PC-3 (cell line): ENCODE measurements at regions of chr6 and their contacts with region 1.

Region 1: DNA sequence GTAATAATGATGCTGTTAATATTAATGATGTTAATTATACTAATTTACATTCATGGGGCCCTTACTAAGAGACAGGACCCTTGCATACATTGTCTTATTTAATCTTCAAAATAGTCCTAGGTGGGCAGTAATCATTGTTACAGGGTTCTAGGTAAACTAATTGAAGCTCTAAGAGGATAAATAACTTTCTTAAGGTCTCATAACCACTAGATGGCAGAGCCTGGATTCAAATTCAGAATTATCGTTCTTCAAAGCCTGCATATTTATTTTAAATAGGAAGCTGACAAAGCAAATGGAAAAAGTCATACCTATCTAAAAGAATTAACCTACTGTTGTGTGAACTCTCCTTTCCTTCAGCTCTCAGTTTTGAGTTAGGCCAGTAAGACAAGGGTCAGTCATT is 23.5 kb downstream of the PTCHD4 start:
- DNase-seq: peak; percentile 68
- ATAC-seq: peak; percentile 48; the same call in 1 of the 2 replicates
- H3K4me3 ChIP-seq: no peak overlapping the region
- H3K27ac ChIP-seq: no peak overlapping the region
- H3K4me1 ChIP-seq: no peaks in the 10 kb centered on the region
- H3K27me3 ChIP-seq: no peaks in the 10 kb centered on the region
- CTCF ChIP-seq: peak; percentile 66

Region 2: DNA sequence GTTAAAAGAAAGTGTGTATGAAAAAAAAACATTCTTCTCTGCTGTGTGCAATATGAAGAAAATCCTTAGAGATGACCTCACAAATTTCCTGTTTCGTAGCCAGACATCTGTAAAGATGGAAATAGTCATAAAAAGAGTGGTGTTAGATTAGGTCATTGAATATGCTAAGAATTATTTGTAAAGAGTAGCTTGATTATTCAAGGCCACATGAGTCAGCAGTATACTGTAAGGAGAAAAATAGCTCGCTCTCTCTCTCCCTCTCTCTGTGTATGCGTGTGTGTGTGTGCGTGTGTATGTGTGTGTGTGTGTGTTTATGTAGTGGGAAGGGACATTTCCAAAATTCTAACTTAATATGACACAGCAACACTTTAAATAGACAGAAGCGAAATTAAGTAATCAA is 55.3 kb before region 1 on chr6:
- CTCF ChIA-PET with region 1: no interaction called
- POLR2A ChIA-PET with region 1: no interaction called
- intact Hi-C with region 1: no loop called
- DNase-seq: peak; percentile 36
- ATAC-seq: no peak
- H3K4me3 ChIP-seq: no peak overlapping the region
- H3K27ac ChIP-seq: no peak overlapping the region
- H3K4me1 ChIP-seq: no peaks in the 10 kb centered on the region
- H3K27me3 ChIP-seq: no peaks in the 10 kb centered on the region
- CTCF ChIP-seq: no peak

Region 3: DNA sequence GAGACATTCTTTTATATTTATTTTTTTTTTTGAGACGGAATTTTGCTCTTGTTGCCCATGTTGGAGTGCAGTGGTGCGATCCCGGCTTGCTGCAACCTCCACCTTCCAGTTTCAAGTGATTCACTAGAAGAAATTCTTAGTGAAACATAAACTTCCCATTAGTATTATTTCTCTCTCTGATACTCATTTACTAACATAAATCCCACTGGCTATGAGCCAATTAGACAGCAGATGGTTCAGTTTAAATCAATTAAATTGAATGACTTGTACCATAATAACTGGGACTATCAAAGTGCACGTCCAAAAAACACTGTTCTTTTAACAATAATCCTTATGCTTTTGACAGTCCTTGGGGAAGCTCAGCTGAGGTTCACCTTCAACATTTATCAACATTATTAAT is 134.8 kb after region 1 on chr6:
- CTCF ChIA-PET with region 1: no interaction called
- POLR2A ChIA-PET with region 1: no interaction called
- intact Hi-C with region 1: no loop called
- DNase-seq: no peak
- ATAC-seq: no peak
- H3K4me3 ChIP-seq: no peak overlapping the region
- H3K27ac ChIP-seq: no peak overlapping the region
- H3K4me1 ChIP-seq: no peaks in the 10 kb centered on the region
- H3K27me3 ChIP-seq: no peaks in the 10 kb centered on the region
- CTCF ChIP-seq: no peak

Region 4: DNA sequence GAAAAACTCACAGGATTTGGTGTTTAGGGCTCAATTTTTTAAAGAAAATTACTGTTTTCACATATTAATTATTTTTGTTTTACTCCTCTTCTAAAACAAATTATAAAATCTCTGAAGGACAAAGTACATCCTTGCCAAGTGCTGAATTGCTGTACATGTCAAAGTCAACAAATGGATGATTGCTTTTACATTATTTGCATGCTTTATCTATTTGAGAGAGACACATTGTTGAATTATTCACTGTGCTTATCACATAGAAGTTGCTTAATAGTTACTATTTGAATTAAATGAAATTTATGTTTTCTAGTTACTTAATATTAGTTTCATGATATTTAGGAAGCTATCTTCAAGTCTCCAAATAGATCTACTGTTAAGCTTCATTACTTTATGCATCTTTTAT is 342.2 kb after region 1 on chr6:
- CTCF ChIA-PET with region 1: no interaction called
- POLR2A ChIA-PET with region 1: no interaction called
- intact Hi-C with region 1: loop called (anchors 5 kb)
- DNase-seq: peak; percentile 6
- ATAC-seq: no peak
- H3K4me3 ChIP-seq: no peak overlapping the region
- H3K27ac ChIP-seq: no peak overlapping the region
- H3K4me1 ChIP-seq: peaks cover 22% of the 10 kb centered on the region
- H3K27me3 ChIP-seq: no peaks in the 10 kb centered on the region
- CTCF ChIP-seq: no peak

Region 5: DNA sequence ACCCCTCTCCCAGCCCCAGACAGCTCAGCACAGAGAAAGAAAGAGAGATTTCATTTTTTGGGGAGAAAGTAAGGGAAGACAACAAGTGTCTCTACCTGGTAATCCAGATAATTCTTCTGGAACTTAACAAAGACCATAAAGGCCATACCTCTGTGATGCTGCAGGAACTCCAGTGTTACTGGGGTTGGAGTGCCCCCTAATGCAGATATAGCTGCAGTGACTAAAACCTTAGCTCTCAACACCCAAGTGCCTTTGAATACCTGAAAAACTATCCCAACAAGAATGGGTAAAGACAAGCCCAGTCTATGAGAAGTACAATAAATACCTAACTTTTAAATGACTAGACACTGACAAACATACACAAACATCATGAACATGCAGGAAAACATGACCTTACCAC is 388.8 kb after region 1 on chr6:
- CTCF ChIA-PET with region 1: interaction called, 6 read pairs
- POLR2A ChIA-PET with region 1: no interaction called
- intact Hi-C with region 1: loop called (anchors 2 kb)
- DNase-seq: peak; percentile 41
- ATAC-seq: peak; percentile 55; the same call in 1 of the 2 replicates
- H3K4me3 ChIP-seq: no peak overlapping the region
- H3K27ac ChIP-seq: no peak overlapping the region
- H3K4me1 ChIP-seq: no peaks in the 10 kb centered on the region
- H3K27me3 ChIP-seq: no peaks in the 10 kb centered on the region
- CTCF ChIP-seq: peak; percentile 50; the same call in 1 of the 2 replicates

Region 6: GRCh38 chr6:48765352-48765961 is 678.0 kb after region 1 on chr6:
- CTCF ChIA-PET with region 1: interaction called, 10 read pairs
- POLR2A ChIA-PET with region 1: no interaction called
- intact Hi-C with region 1: loop called (anchors 1 kb)
- DNase-seq: peak; percentile 87
- ATAC-seq: peak; percentile 82
- H3K4me3 ChIP-seq: no peak overlapping the region
- H3K27ac ChIP-seq: peak overlapping the region; percentile 79
- H3K4me1 ChIP-seq: peaks cover 34% of the 10 kb centered on the region
- H3K27me3 ChIP-seq: no peaks in the 10 kb centered on the region
- CTCF ChIP-seq: peak; percentile 87

Region 7: DNA sequence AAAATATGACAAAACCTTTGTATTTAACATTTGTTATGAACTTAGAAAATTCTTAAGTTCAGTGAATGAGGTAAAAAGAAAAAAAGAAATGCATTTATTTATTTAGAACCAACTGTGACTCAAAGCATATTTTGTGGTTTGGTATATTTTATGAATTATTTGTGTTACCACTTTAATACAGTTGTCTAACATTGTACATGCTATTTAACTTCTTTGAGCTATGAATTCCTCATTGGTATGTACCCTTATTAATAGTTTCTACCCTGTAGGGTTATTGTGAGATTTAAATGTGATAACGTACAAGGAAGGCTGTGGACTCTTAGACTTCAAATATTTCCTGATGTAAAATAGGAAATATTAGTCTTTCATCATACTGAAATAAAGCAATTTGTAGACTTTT is 1213.0 kb after region 1 on chr6:
- CTCF ChIA-PET with region 1: no interaction called
- POLR2A ChIA-PET with region 1: no interaction called
- intact Hi-C with region 1: loop called (anchors 10 kb)
- DNase-seq: peak; percentile 60
- ATAC-seq: peak; percentile 87
- H3K4me3 ChIP-seq: no peak overlapping the region
- H3K27ac ChIP-seq: peak overlapping the region; percentile 51
- H3K4me1 ChIP-seq: peaks cover 18% of the 10 kb centered on the region
- H3K27me3 ChIP-seq: no peaks in the 10 kb centered on the region
- CTCF ChIP-seq: no peak